ENCODE measurements at regions of chr10 and their contacts with region 1.

Region 1: DNA sequence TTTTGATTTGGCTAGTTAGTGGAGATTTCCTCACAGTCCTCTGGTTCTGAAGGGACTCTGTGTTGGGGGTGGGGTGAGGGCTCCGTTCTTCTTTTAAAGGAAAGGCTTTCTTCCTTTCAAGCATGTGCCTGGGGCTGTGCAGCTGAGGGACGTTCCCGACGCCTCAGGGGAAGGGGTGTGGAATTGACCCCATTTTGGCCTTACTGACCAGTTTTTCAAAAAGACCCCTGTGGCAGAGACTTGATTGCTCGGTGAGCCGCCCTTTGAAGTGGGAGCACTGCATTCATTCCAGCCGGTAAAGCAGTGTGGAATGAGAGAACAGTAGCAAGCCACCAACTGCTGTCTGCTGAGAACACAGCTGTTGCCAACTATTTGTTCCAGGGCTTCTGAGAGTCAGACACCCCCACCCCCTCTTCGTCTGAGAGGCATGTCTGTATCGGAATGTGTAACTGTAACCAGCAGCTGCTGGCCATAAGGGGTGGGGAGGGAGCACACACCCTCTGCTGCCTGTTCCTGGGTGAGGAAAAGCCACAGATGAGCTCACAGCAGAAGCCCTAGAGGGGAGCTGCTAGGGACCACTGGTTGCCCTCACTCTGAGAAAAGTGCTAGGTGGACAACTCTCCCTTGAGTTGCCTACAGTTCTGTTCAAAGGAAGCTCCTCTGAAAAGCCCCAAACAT is 33.2 kb downstream of the WBP1L start:
- DNase-seq: no peak
- ATAC-seq: peak; percentile 59
- H3K4me3 ChIP-seq: peak overlapping the region; percentile 21 to 53
- H3K27ac ChIP-seq: peak overlapping the region; percentile 94
- H3K4me1 ChIP-seq: peaks cover 94% of the 10 kb centered on the region
- H3K27me3 ChIP-seq: no peaks in the 10 kb centered on the region
- CTCF ChIP-seq: no peak

Region 2: GRCh38 chr10:102394079-102394800 is 382.7 kb before region 1 on chr10:
- CTCF ChIA-PET with region 1: no interaction called
- POLR2A ChIA-PET with region 1: no interaction called
- in situ Hi-C with region 1: no loop called
- intact Hi-C with region 1: no loop called
- DNase-seq: peak; percentile 79
- ATAC-seq: peak; percentile 92
- H3K4me3 ChIP-seq: peak overlapping the region; percentile 67 to 89
- H3K27ac ChIP-seq: peak overlapping the region; percentile 63
- H3K4me1 ChIP-seq: peaks cover 23% of the 10 kb centered on the region
- H3K27me3 ChIP-seq: no peaks in the 10 kb centered on the region; the same call in 1 of the 2 replicates
- CTCF ChIP-seq: peak; percentile 86

Region 3: GRCh38 chr10:102583435-102584417 is 193.2 kb before region 1 on chr10:
- CTCF ChIA-PET with region 1: no interaction called
- POLR2A ChIA-PET with region 1: no interaction called
- in situ Hi-C with region 1: no loop called
- intact Hi-C with region 1: no loop called
- DNase-seq: peak; percentile 74
- ATAC-seq: peak; percentile 99
- H3K4me3 ChIP-seq: no peak overlapping the region
- H3K27ac ChIP-seq: no peak overlapping the region
- H3K4me1 ChIP-seq: peaks cover 5% of the 10 kb centered on the region; the same call in 1 of the 2 replicates
- H3K27me3 ChIP-seq: no peaks in the 10 kb centered on the region
- CTCF ChIP-seq: peak; percentile 94

Region 4: DNA sequence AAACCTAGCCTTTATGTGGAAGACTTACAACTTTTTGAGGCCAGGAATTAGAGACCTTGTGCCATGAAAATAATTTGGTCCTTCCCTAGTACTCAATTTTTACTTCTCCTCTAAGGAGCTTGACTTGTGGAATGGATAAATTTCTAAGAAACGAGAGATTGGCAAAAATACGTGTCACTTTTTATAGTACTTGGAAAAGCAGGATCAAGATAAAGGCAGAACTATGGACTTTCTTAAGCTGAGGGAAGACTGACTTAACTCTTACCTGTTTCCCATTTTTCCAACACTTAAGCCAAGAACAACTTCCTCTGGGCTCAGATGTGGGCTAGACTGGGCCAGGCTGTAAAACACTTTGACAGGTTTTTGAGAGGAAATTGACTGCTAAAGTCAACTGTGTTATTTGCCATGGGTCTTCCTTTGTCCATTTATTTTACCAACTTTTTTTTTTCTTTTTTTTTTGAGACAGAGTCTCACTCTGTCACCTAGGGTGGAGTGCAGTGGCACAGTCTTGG is 35.1 kb before region 1 on chr10:
- CTCF ChIA-PET with region 1: no interaction called
- POLR2A ChIA-PET with region 1: no interaction called
- in situ Hi-C with region 1: no loop called
- intact Hi-C with region 1: no loop called
- DNase-seq: no peak
- ATAC-seq: no peak
- H3K4me3 ChIP-seq: no peak overlapping the region
- H3K27ac ChIP-seq: no peak overlapping the region
- H3K4me1 ChIP-seq: peaks cover 20% of the 10 kb centered on the region
- H3K27me3 ChIP-seq: no peaks in the 10 kb centered on the region
- CTCF ChIP-seq: no peak

Region 5: DNA sequence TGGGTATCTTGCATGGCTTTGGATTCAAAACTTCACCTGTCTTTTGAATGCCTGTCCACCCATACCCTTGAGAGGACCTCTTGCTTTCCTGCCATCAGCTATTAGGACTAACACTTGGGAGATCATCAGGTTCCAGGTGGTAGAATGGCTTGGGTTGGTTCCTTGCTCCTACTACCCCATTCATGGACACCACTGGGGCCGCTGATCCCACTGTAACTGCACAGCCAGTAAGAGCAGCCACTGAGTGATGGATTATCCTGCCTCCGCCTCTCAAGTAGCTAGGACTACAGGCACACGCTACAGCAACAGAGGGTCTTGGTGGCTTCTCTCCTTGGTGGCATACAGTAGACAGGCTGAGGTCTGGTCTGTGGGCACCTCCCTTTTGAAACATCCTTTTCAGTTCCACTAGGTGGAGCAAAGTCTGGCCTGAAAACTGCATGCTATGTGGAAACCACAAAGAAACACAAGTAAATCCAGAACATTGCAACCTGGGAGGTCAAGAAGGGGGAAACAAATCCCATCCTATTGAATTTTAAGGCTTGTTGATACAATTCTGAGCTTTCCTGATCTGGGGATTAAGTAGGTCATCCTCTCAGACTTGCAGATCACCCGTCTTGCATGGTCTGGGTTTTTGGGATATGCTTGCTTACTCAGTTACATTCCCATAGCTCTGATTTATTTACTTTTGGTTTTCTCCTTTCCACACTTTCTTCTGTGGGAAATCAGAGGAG is 23.8 kb before region 1 on chr10:
- CTCF ChIA-PET with region 1: interaction called, 11 read pairs
- POLR2A ChIA-PET with region 1: no interaction called
- in situ Hi-C with region 1: no loop called
- intact Hi-C with region 1: no loop called
- DNase-seq: no peak
- ATAC-seq: peak; percentile 92
- H3K4me3 ChIP-seq: no peak overlapping the region
- H3K27ac ChIP-seq: peak overlapping the region; percentile 75
- H3K4me1 ChIP-seq: peaks cover 26% of the 10 kb centered on the region
- H3K27me3 ChIP-seq: no peaks in the 10 kb centered on the region
- CTCF ChIP-seq: peak; percentile 89

Region 6: GRCh38 chr10:102802920-102803534 is 26.1 kb after region 1 on chr10:
- CTCF ChIA-PET with region 1: no interaction called
- POLR2A ChIA-PET with region 1: interaction called, 16 read pairs
- in situ Hi-C with region 1: no loop called
- intact Hi-C with region 1: no loop called
- DNase-seq: no peak
- ATAC-seq: peak; percentile 81
- H3K4me3 ChIP-seq: no peak overlapping the region
- H3K27ac ChIP-seq: peak overlapping the region; percentile 1; the same call in 1 of the 2 replicates
- H3K4me1 ChIP-seq: peaks cover 35% of the 10 kb centered on the region
- H3K27me3 ChIP-seq: no peaks in the 10 kb centered on the region
- CTCF ChIP-seq: no peak

Region 7: DNA sequence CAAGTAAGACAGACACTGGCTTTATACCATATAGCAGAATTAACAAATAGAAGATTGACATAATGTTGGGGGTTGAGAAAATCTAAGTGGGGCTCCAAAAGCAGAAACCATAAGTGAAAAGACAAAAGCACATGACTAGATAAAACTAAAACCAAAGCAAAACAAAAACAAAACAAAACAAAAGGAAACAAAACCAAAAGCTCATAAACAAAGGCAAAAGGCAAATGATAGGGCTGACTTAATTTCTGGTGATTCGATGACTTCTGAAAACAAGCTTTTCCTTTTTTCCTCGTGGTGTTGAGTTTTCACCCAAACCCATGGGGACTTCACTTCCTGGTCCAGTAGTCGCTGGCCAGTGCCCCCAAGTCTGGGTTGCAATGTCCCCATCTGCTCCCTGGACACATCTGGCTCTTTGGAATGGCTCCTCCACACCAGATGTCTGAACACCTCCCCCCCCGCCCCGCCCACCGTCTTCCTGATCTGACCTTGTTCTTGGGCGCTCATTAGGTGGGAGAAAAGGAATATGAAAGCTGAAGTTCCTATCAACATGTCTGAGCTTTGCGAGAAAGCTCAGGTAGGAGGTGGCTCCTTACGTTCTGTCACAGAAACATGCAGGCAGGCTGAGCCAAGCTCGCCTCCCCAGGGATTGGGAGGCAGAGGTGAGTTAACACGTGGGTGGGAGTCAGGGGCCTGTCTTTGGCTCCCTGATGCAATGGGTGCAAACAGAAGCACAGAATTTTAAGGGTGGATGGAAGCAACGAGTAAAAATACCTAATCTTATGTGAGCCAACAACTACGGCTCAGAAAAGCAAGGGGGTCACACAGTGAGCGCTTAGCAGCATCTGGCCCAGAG is 837.6 kb after region 1 on chr10:
- CTCF ChIA-PET with region 1: no interaction called
- POLR2A ChIA-PET with region 1: interaction called, 12 read pairs
- in situ Hi-C with region 1: no loop called
- intact Hi-C with region 1: no loop called
- DNase-seq: no peak
- ATAC-seq: no peak
- H3K4me3 ChIP-seq: no peak overlapping the region
- H3K27ac ChIP-seq: no peak overlapping the region
- H3K4me1 ChIP-seq: no peaks in the 10 kb centered on the region
- H3K27me3 ChIP-seq: no peaks in the 10 kb centered on the region
- CTCF ChIP-seq: no peak

Measured in Panc1 (cell line).